PC-3 (cell line): ENCODE measurements at regions of chr10 and their contacts with region 1.

Region 1: DNA sequence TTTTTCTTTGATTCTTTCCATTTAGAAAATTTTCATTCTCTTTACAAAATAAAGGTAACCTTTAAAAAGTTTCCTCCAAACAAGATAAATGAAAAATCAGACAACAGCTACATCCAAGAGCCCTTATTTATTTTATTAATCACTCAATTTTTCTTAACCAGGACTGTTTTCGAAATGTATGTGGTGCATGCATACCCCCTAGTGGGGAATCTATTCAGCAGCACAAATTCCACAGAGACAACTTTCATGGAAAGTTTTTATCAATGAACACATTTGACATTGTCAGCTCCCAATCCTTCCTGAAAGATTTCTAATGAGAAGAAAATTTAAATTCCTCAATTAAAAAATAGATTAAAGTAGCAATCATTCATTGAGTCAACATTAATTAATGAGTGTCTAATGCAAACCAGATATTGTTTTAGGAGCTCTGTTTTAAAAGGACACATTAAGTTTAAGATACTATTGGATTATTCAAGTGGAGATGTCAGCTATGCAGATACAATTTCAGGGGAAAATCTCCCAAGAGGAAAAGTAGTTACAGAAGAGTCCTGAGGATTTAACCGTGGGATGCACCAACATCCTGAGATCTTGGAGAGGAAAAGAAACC is 5.2 kb upstream of the HTR7 start:
- DNase-seq: peak; percentile 66
- ATAC-seq: no peak
- H3K4me3 ChIP-seq: no peak overlapping the region
- H3K27ac ChIP-seq: no peak overlapping the region
- H3K4me1 ChIP-seq: peaks cover 20% of the 10 kb centered on the region
- H3K27me3 ChIP-seq: no peaks in the 10 kb centered on the region
- CTCF ChIP-seq: peak; percentile 85

Region 2: DNA sequence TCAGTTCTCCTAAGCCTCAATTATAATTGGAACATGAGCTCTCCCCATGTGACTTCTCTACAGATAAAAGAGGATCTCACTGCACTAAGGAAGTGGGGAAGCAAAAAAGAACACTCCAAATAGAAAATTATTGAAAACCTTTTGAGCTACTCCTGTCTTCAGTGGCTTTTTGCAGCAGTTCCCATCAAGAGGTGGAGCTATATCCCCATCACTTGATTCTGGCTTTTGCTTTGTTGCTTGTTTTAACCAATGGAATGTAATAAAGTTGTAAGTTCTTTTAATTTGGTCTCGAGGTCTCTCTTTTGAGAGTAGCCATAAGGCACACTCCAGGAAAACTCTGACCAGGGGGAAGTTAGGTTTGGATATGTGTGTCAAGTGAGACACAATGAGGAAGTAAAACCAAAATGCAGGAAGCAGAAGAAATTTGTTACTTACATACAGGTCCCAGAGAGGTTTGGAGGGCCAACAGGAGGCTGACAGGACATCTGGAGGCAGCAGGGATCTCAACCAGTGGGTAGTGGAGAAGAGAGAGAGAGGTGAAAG is 574.5 kb before region 1 on chr10:
- CTCF ChIA-PET with region 1: no interaction called
- POLR2A ChIA-PET with region 1: no interaction called
- intact Hi-C with region 1: loop called (anchors 5 kb)
- DNase-seq: peak; percentile 53
- ATAC-seq: peak; percentile 66
- H3K4me3 ChIP-seq: no peak overlapping the region
- H3K27ac ChIP-seq: peak overlapping the region; percentile 42
- H3K4me1 ChIP-seq: peaks cover 19% of the 10 kb centered on the region
- H3K27me3 ChIP-seq: no peaks in the 10 kb centered on the region
- CTCF ChIP-seq: peak; percentile 63

Region 3: GRCh38 chr10:90424730-90425129 is 438.3 kb before region 1 on chr10:
- CTCF ChIA-PET with region 1: no interaction called
- POLR2A ChIA-PET with region 1: no interaction called
- intact Hi-C with region 1: no loop called
- DNase-seq: peak; percentile 59
- ATAC-seq: peak; percentile 76
- H3K4me3 ChIP-seq: no peak overlapping the region
- H3K27ac ChIP-seq: no peak overlapping the region
- H3K4me1 ChIP-seq: peaks cover 9% of the 10 kb centered on the region
- H3K27me3 ChIP-seq: no peaks in the 10 kb centered on the region
- CTCF ChIP-seq: no peak

Region 4: GRCh38 chr10:90751107-90751997 is 111.7 kb before region 1 on chr10:
- CTCF ChIA-PET with region 1: interaction called, 5 read pairs
- POLR2A ChIA-PET with region 1: no interaction called
- intact Hi-C with region 1: loop called (anchors 1 kb)
- DNase-seq: peak; percentile 70
- ATAC-seq: peak; percentile 78
- H3K4me3 ChIP-seq: no peak overlapping the region
- H3K27ac ChIP-seq: no peak overlapping the region
- H3K4me1 ChIP-seq: no peaks in the 10 kb centered on the region
- H3K27me3 ChIP-seq: no peaks in the 10 kb centered on the region
- CTCF ChIP-seq: peak; percentile 82

Region 5: GRCh38 chr10:90779548-90779947 is 83.5 kb before region 1 on chr10:
- CTCF ChIA-PET with region 1: no interaction called
- POLR2A ChIA-PET with region 1: no interaction called
- intact Hi-C with region 1: loop called (anchors 1 kb)
- DNase-seq: peak; percentile 56
- ATAC-seq: peak; percentile 48
- H3K4me3 ChIP-seq: no peak overlapping the region
- H3K27ac ChIP-seq: no peak overlapping the region
- H3K4me1 ChIP-seq: no peaks in the 10 kb centered on the region
- H3K27me3 ChIP-seq: no peaks in the 10 kb centered on the region
- CTCF ChIP-seq: peak; percentile 50